ENCODE measurements at regions of chr7 and their contacts with region 1.

Region 1: GRCh38 chr7:13476881-13477444 is 512.5 kb downstream of the ETV1 start:
- DNase-seq: no peak
- H3K4me3 ChIP-seq: no peak overlapping the region
- H3K27ac ChIP-seq: no peak overlapping the region
- H3K4me1 ChIP-seq: no peaks in the 10 kb centered on the region
- H3K27me3 ChIP-seq: no peaks in the 10 kb centered on the region
- CTCF ChIP-seq: no peak
- EP300 ChIP-seq: no peak
- POLR2A ChIP-seq: no peak

Region 2: GRCh38 chr7:13132314-13132713 is 344.6 kb before region 1 on chr7:
- intact Hi-C with region 1: no loop called
- DNase-seq: no peak
- H3K4me3 ChIP-seq: no peak overlapping the region
- H3K27ac ChIP-seq: no peak overlapping the region
- H3K4me1 ChIP-seq: no peaks in the 10 kb centered on the region
- H3K27me3 ChIP-seq: no peaks in the 10 kb centered on the region
- CTCF ChIP-seq: no peak
- EP300 ChIP-seq: no peak
- POLR2A ChIP-seq: no peak

Region 3: GRCh38 chr7:13496976-13497375 is 20.0 kb after region 1 on chr7:
- intact Hi-C with region 1: loop called in 1 of 4 experiments (anchors 1 kb)
- DNase-seq: no peak
- H3K4me3 ChIP-seq: no peak overlapping the region
- H3K27ac ChIP-seq: no peak overlapping the region
- H3K4me1 ChIP-seq: no peaks in the 10 kb centered on the region
- H3K27me3 ChIP-seq: no peaks in the 10 kb centered on the region
- CTCF ChIP-seq: no peak
- EP300 ChIP-seq: no peak
- POLR2A ChIP-seq: no peak

Measured in ovary (tissue), 10 donors.